Thyroid gland (tissue), 4 donors: ENCODE measurements at regions of chr13 and their contacts with region 1.

Region 1: DNA sequence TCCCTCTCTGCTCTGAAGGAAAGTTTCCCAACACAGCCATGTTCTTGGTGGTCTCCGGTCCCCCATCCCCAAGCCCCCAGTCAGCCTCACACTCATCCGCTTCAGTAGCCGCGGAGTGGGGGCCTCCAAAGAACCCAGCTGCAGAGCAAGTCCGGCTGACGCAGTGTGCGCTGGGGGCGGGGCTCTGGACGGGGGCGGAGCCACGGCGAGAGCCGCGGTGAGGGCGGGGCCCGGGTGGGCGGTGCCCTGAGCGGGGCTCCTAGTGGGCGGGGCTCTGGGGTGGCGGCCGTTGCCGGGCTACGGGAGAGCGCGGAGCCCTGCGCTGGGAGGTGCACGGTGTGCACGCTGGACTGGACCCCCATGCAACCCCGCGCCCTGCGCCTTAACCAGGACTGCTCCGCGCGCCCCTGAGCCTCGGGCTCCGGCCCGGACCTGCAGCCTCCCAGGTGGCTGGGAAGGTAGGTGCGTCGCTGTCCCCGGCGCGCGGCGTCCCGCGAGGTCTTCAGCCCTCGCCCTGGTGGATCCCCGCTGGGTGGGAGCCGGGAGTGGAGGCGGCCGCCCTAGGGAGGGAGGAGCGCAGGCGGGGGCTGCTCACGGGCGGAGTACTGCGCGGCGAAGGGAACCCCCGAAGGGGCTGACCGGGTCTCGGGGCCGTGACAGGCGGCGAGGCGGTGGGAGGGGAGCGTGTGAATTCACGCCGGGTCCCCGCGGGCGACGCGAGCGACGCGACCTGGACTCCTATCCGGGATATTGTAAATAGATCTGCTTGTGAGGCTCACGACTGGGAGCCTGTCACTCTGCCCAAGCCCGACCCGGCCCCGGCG is 9.1 kb downstream of the TNFRSF19 start:
- DNase-seq: peak; percentile 87 to 92
- H3K4me3 ChIP-seq: peak overlapping the region; percentile 31 to 77 (median 71)
- H3K27ac ChIP-seq: peak overlapping the region; percentile 60 to 73 (median 64)
- H3K4me1 ChIP-seq: peaks cover 0 to 7% of the 10 kb centered on the region in 2 donors
- H3K27me3 ChIP-seq: no peaks in the 10 kb centered on the region
- CTCF ChIP-seq: no peak
- POLR2A ChIP-seq: peak in 1 of 2 donors; percentile 69

Region 2: DNA sequence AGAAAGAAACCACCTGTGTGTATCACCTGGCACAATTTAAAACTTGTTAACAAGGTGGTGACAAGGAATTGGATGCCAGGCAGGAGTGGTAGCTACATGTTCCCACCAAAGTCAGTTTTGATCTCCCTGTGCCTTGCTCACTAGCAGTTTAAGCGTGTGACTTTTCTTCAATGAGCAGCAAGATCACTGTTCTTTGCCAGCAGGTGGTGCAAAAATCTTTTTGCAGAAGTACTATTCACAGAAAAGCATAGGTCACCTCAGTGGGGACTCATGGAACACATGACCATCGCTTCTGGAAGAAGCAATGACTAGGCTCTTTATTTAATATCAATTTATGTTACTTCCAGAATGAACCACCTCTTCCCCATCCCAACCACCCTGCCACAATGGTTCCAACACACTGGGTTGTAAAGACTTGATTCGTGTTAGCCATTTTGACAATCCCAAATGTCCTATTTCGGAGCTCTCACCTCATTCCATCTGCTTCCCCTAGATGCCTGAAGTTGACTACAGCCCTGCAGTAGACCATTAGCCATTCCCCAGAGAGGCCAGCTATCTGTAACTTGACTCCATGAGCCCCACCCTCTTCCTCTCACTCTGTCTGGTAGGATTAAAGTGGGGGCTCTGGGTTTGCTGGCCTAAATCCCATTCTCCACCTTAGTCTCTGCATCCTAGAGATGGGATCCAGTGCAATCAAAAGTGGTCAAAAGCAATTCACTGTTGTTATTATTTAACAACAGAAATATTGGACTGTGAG is 68.1 kb before region 1 on chr13:
- intact Hi-C with region 1: no loop called
- DNase-seq: peak; percentile 6 to 8
- H3K4me3 ChIP-seq: no peak overlapping the region
- H3K27ac ChIP-seq: no peak overlapping the region
- H3K4me1 ChIP-seq: no peaks in the 10 kb centered on the region
- H3K27me3 ChIP-seq: no peaks in the 10 kb centered on the region
- CTCF ChIP-seq: peak in 4 of 6 experiments; percentile 27 to 49 (median 42)
- POLR2A ChIP-seq: no peak

Region 3: DNA sequence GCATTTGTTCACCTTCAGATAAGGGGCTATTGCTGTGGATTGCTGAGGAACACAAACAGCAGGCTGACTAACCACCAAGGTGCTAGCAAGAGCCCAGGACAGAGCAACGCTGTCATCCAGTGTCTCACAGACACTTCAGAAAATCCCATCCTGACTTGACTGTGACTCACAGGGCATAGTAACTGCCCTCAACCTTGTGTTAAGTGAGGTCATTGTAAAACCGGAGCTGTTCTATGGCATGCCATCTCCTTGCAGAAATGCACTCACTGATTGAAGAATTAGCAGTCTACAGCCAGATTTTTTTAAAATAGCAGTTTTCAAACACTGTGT is 42.0 kb after region 1 on chr13:
- intact Hi-C with region 1: loop called (anchors 10 kb)
- DNase-seq: no peak
- H3K4me3 ChIP-seq: no peak overlapping the region
- H3K27ac ChIP-seq: no peak overlapping the region
- H3K4me1 ChIP-seq: no peaks in the 10 kb centered on the region
- H3K27me3 ChIP-seq: no peaks in the 10 kb centered on the region
- CTCF ChIP-seq: no peak
- POLR2A ChIP-seq: no peak